Heart left ventricle (tissue), 16 donors: ENCODE measurements at regions of chr18 and their contacts with region 1.

Region 1: GRCh38 chr18:29104671-29105070 is 927.7 kb upstream of the CDH2 start:
- DNase-seq: no peak
- ATAC-seq: no peak
- H3K4me3 ChIP-seq: no peak overlapping the region
- H3K27ac ChIP-seq: no peak overlapping the region
- H3K4me1 ChIP-seq: no peaks in the 10 kb centered on the region
- H3K27me3 ChIP-seq: no peaks in the 10 kb centered on the region
- CTCF ChIP-seq: no peak
- POLR2A ChIP-seq: no peak

Region 2: DNA sequence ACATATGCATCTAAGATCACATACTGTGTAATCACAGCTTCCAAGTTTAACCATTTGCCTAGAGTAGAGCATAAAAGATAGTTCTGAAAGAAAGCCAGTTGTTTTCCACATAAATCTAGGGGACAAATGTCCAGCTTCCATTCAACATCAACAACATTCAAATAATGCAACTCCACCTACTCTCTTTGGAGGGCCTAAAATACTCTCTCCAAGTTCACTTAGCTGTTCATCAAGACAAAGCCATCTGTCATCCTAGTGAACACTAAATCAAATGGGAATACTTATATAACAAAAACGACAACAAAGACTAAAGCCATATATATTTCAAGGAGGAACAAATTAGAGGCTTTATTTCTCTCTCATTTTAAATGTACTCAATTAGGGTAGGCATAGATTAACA is 706.2 kb before region 1 on chr18:
- intact Hi-C with region 1: no loop called
- DNase-seq: no peak
- ATAC-seq: no peak
- H3K4me3 ChIP-seq: no peak overlapping the region
- H3K27ac ChIP-seq: no peak overlapping the region
- H3K4me1 ChIP-seq: no peaks in the 10 kb centered on the region
- H3K27me3 ChIP-seq: no peaks in the 10 kb centered on the region
- CTCF ChIP-seq: no peak
- POLR2A ChIP-seq: no peak

Region 3: GRCh38 chr18:29164020-29164706 is 59.5 kb after region 1 on chr18:
- intact Hi-C with region 1: loop called in 1 of 10 experiments (anchors 10 kb)
- DNase-seq: no peak
- ATAC-seq: peak; percentile 42 to 94 (median 76)
- H3K4me3 ChIP-seq: no peak overlapping the region
- H3K27ac ChIP-seq: peak overlapping the region in 5 of 12 donors; percentile 26 to 43 (median 42)
- H3K4me1 ChIP-seq: peaks cover 0 to 10% (median 0%) of the 10 kb centered on the region in 12 donors
- H3K27me3 ChIP-seq: no peaks in the 10 kb centered on the region
- CTCF ChIP-seq: no peak
- POLR2A ChIP-seq: no peak

Region 4: GRCh38 chr18:29629493-29630042 is 524.9 kb after region 1 on chr18:
- intact Hi-C with region 1: no loop called
- DNase-seq: no peak
- ATAC-seq: no peak
- H3K4me3 ChIP-seq: no peak overlapping the region
- H3K27ac ChIP-seq: no peak overlapping the region
- H3K4me1 ChIP-seq: no peaks in the 10 kb centered on the region
- H3K27me3 ChIP-seq: no peaks in the 10 kb centered on the region
- CTCF ChIP-seq: no peak
- POLR2A ChIP-seq: no peak